ENCODE measurements at regions of chr1 and their contacts with region 1.

Region 1: GRCh38 chr1:23634842-23635651 is 56.6 kb upstream of the RPL11 start:
- DNase-seq: peak; percentile 77
- ATAC-seq: peak; percentile 88
- H3K4me3 ChIP-seq: peak overlapping the region; percentile 66
- H3K27ac ChIP-seq: peak overlapping the region; percentile 90
- H3K4me1 ChIP-seq: peaks cover 10% of the 10 kb centered on the region
- H3K27me3 ChIP-seq: no peaks in the 10 kb centered on the region; the same call in 1 of the 2 replicates
- CTCF ChIP-seq: peak; percentile 94
- POLR2A ChIP-seq: peak; percentile 51; the same call in 1 of the 2 replicates
- RAD21 ChIP-seq: peak; percentile 72

Region 2: GRCh38 chr1:23496490-23497181 is 138.4 kb before region 1 on chr1:
- CTCF ChIA-PET with region 1: interaction called, 5 read pairs
- POLR2A ChIA-PET with region 1: no interaction called
- dilution Hi-C with region 1: no loop called
- in situ Hi-C with region 1: no loop called
- intact Hi-C with region 1: loop called (anchors 2 kb)
- DNase-seq: no peak
- ATAC-seq: no peak
- H3K4me3 ChIP-seq: no peak overlapping the region
- H3K27ac ChIP-seq: no peak overlapping the region
- H3K4me1 ChIP-seq: no peaks in the 10 kb centered on the region
- H3K27me3 ChIP-seq: peaks cover 2% of the 10 kb centered on the region
- CTCF ChIP-seq: no peak
- POLR2A ChIP-seq: no peak
- RAD21 ChIP-seq: no peak

Region 3: GRCh38 chr1:23559136-23559984 is 75.7 kb before region 1 on chr1 and contains the start of gene ID3:
- CTCF ChIA-PET with region 1: interaction called, 67 read pairs
- POLR2A ChIA-PET with region 1: interaction called, 9 read pairs
- dilution Hi-C with region 1: no loop called
- in situ Hi-C with region 1: no loop called
- intact Hi-C with region 1: loop called (anchors 1 kb)
- DNase-seq: peak; percentile 96
- ATAC-seq: peak; percentile 69
- H3K4me3 ChIP-seq: peak within 1 kb of the TSS; percentile 76
- H3K27ac ChIP-seq: peak within 1 kb of the TSS; percentile 91
- H3K4me1 ChIP-seq: peaks cover 37% of the 10 kb centered on the region
- H3K27me3 ChIP-seq: no peaks in the 10 kb centered on the region
- CTCF ChIP-seq: no peak
- POLR2A ChIP-seq: peak; percentile 99
- RAD21 ChIP-seq: no peak; the same call in none of the 2 replicates
- total RNA-seq, gene ID3: 109 and 171 TPM in 2 replicates

Region 4: DNA sequence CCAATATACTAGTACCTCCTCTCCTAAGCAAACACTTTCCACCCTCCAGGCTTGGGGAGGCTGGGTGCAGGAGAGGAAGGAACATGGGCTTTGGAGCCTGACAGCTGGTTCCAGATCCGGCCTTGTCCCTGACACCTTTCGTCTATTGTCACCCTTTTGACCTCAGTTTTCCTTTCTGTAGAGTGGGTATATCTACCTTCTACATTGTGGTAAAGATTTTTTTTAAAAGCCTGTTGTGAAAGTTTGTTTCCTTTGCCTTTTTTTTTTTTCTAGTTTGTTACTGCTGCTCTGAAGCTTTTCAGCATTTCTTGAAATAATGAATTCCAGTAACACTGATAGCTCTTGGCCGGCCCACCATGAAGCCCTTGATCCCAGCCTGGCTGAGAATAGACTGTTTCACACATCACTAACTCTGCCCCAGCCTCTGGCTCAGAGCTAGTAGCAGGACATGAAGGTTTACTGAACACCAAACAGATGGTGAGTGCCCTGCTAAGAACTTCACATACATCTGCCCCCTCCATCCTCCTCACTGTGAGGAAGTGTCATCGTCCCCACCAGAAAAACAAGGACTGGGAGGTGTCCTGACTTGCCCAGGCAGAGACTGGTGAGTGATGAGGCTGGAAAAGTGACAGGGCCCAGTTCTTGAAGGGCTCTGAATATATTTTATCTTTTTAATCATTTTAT is 42.7 kb before region 1 on chr1:
- CTCF ChIA-PET with region 1: no interaction called
- POLR2A ChIA-PET with region 1: no interaction called
- dilution Hi-C with region 1: no loop called
- in situ Hi-C with region 1: no loop called
- intact Hi-C with region 1: no loop called
- DNase-seq: no peak
- ATAC-seq: peak; percentile 39
- H3K4me3 ChIP-seq: no peak overlapping the region
- H3K27ac ChIP-seq: peak overlapping the region; percentile 12; the same call in 1 of the 2 replicates
- H3K4me1 ChIP-seq: peaks cover 14% of the 10 kb centered on the region
- H3K27me3 ChIP-seq: no peaks in the 10 kb centered on the region
- CTCF ChIP-seq: no peak
- POLR2A ChIP-seq: no peak
- RAD21 ChIP-seq: no peak

Region 5: DNA sequence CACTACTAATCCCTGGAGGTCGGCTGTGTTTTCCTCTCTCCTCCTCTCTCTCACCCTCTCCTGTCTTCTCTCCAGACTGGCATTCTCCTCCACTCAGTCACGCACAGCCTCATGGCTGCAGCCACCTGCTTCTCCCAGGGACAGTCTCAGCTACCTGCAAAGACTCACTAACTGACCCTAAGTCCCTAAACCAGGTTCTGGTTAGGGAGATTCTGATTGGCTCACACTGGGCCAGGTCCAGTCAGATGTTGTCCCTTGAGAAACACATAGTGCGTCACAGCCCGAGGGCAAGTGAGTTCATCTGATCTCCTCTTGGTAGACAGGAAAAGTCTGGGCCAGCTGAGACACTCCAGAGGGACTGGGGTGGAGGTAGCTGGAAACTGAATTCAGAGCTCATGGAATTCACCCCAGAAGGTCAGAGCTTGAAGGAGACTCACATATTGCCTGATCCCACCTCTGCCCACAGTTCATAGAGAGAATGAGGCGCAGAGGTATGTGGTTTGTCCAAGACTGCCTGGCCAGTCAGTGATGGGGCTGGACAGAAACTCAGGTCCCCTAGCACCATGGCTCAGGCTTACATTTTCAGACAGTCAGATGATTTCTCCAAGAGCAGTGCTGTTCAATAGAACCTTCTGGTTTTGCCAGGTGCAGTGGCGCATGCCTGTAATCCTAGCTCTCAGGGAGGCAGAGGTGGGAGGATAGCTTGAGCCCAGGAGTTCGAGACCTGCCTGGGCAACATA is 16.2 kb after region 1 on chr1:
- CTCF ChIA-PET with region 1: interaction called, 10 read pairs
- POLR2A ChIA-PET with region 1: no interaction called
- dilution Hi-C with region 1: no loop called
- in situ Hi-C with region 1: no loop called
- intact Hi-C with region 1: no loop called
- DNase-seq: peak; percentile 28
- ATAC-seq: peak; percentile 46
- H3K4me3 ChIP-seq: no peak overlapping the region
- H3K27ac ChIP-seq: no peak overlapping the region
- H3K4me1 ChIP-seq: no peaks in the 10 kb centered on the region
- H3K27me3 ChIP-seq: peaks cover 33% of the 10 kb centered on the region
- CTCF ChIP-seq: no peak
- POLR2A ChIP-seq: no peak
- RAD21 ChIP-seq: no peak

Region 6: DNA sequence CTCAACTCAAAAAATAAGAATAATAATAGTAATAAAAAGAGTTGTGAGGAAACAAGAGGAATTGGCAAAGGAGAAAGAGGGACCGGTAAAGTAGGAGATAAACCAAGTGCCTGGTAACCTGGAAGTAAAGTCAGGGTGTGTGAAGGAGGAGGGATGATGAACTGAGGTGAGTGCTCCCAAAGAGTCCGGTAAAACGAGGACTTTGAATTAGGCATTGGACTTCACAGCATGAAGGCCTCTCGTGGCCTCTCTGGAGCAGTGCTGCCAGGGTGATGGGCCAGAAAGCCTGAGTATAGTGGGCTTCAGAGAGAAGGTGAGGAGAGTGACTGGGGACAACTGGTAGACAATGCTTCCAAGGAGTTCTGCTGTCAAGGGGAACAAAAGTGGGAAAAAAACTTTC is 74.2 kb after region 1 on chr1:
- CTCF ChIA-PET with region 1: no interaction called
- POLR2A ChIA-PET with region 1: no interaction called
- dilution Hi-C with region 1: no loop called
- in situ Hi-C with region 1: no loop called
- intact Hi-C with region 1: no loop called
- DNase-seq: no peak
- ATAC-seq: no peak
- H3K4me3 ChIP-seq: no peak overlapping the region
- H3K27ac ChIP-seq: no peak overlapping the region
- H3K4me1 ChIP-seq: no peaks in the 10 kb centered on the region
- H3K27me3 ChIP-seq: no peaks in the 10 kb centered on the region
- CTCF ChIP-seq: no peak
- POLR2A ChIP-seq: no peak
- RAD21 ChIP-seq: no peak

Region 7: DNA sequence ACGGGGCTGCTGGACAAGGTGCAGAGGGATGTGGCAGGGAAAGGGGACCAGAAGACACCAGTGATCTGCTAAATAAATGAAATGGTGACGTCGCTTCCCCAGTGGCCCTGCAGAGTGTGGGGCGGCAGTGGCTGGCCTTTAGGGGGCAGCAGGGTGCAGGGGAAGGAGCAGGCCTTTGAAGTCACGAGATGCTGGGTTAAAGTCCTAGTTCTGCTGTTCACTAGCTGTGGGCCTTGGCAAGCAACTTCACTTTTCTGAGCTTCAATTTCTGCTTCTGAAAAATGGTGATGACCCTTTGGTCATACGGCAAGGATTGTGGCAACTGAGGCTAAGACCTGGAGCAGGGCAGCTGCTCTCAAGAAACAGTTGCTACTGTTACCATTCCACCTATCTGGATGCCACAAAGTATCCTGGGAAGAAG is 174.7 kb after region 1 on chr1:
- CTCF ChIA-PET with region 1: no interaction called
- POLR2A ChIA-PET with region 1: no interaction called
- dilution Hi-C with region 1: no loop called
- in situ Hi-C with region 1: no loop called
- intact Hi-C with region 1: no loop called
- DNase-seq: peak; percentile 51
- ATAC-seq: peak; percentile 91
- H3K4me3 ChIP-seq: no peak overlapping the region
- H3K27ac ChIP-seq: no peak overlapping the region
- H3K4me1 ChIP-seq: no peaks in the 10 kb centered on the region
- H3K27me3 ChIP-seq: no peaks in the 10 kb centered on the region
- CTCF ChIP-seq: peak; percentile 75
- POLR2A ChIP-seq: no peak
- RAD21 ChIP-seq: peak; percentile 74

Measured in IMR-90 (cell line).